ENCODE measurements at regions of chr2 and their contacts with region 1.

Region 1: GRCh38 chr2:67840460-67841068 is 222.2 kb downstream of the C1D start:
- DNase-seq: peak in 9 of 10 donors; percentile 31 to 69 (median 47)
- H3K4me3 ChIP-seq: no peak overlapping the region
- H3K27ac ChIP-seq: no peak overlapping the region
- H3K27me3 ChIP-seq: peaks cover 0 to 5% (median 0%) of the 10 kb centered on the region in 45 donors
- CTCF ChIP-seq: peak in 55 of 56 donors; percentile 26 to 79 (median 58)

Region 2: GRCh38 chr2:67721516-67721915 is 119.0 kb before region 1 on chr2:
- intact Hi-C with region 1: no loop called
- DNase-seq: no peak
- H3K4me3 ChIP-seq: no peak overlapping the region
- H3K27ac ChIP-seq: no peak overlapping the region
- H3K27me3 ChIP-seq: peaks cover 0 to 23% (median 0%) of the 10 kb centered on the region in 45 donors
- CTCF ChIP-seq: no peak

Region 3: DNA sequence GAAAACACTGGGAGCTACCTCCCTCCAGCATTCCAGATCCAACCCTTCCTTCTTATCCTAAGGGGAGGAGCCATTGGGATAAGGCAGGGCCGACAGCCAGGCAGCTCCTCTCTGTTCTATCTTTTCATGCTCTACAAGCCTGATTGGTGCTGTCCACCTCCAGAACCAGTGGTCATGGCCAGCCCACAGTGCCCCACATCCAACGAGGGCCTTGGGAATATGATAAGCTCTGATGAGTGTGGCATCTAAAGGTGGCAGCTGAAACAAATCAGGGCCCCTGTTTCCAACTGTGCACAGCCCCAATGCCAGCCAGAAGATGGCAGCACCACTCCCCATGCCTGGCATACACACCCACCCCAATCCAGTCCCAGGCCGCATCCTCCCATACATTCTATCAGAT is 107.0 kb before region 1 on chr2:
- intact Hi-C with region 1: loop called in 1 of 2 experiments (anchors 10 kb)
- DNase-seq: peak in 3 of 10 donors; percentile 9 to 30 (median 21)
- H3K4me3 ChIP-seq: no peak overlapping the region
- H3K27ac ChIP-seq: no peak overlapping the region
- H3K27me3 ChIP-seq: peaks cover 0 to 9% (median 0%) of the 10 kb centered on the region in 45 donors
- CTCF ChIP-seq: peak in 48 of 56 donors; percentile 6 to 64 (median 39)